PC-3 (cell line): ENCODE measurements at regions of chr3 and their contacts with region 1.

Region 1: GRCh38 chr3:50519471-50520089 is 16.1 kb upstream of the CACNA2D2 start:
- DNase-seq: peak; percentile 77
- ATAC-seq: peak; percentile 91
- H3K4me3 ChIP-seq: no peak overlapping the region
- H3K27ac ChIP-seq: no peak overlapping the region
- H3K4me1 ChIP-seq: no peaks in the 10 kb centered on the region
- H3K27me3 ChIP-seq: peaks cover 9% of the 10 kb centered on the region; the same call in 1 of the 2 replicates
- CTCF ChIP-seq: peak; percentile 93

Region 2: GRCh38 chr3:50542177-50543034 is 22.8 kb after region 1 on chr3:
- CTCF ChIA-PET with region 1: no interaction called
- POLR2A ChIA-PET with region 1: no interaction called
- intact Hi-C with region 1: loop called (anchors 1 kb)
- DNase-seq: peak; percentile 88
- ATAC-seq: peak; percentile 92
- H3K4me3 ChIP-seq: no peak overlapping the region
- H3K27ac ChIP-seq: no peak overlapping the region
- H3K4me1 ChIP-seq: no peaks in the 10 kb centered on the region
- H3K27me3 ChIP-seq: peaks cover 14% of the 10 kb centered on the region
- CTCF ChIP-seq: peak; percentile 95

Region 3: DNA sequence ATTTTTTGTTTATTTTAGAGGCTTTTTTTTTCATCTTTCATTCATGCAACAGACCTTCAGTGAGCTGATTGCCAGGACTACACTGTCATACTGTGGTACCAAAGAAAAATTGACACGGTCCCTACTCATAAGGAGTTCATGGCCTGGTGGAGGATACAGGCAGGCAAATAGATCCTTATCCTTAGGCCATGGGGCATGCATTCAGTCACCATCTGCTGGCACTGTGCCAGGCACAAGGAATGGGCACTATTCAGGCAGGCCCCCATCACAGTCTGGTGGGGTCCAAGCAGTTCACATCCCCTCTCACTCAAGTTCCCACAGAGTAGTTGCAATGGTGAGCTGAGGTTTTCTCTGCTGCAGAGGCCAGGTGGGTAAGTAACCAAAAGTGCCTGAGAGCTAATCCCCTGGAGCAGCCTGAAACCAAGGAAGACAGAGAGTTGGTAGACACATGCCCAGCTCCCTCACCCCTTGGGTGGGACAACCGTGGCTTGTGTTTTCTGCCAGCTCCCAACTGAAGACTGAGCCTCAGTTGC is 74.7 kb after region 1 on chr3:
- CTCF ChIA-PET with region 1: interaction called, 10 read pairs
- POLR2A ChIA-PET with region 1: no interaction called
- intact Hi-C with region 1: no loop called
- DNase-seq: no peak
- ATAC-seq: no peak
- H3K4me3 ChIP-seq: no peak overlapping the region
- H3K27ac ChIP-seq: no peak overlapping the region
- H3K4me1 ChIP-seq: peaks cover 2% of the 10 kb centered on the region; the same call in 1 of the 2 replicates
- H3K27me3 ChIP-seq: no peaks in the 10 kb centered on the region
- CTCF ChIP-seq: no peak

Region 4: GRCh38 chr3:50600841-50601591 is 81.4 kb after region 1 on chr3:
- CTCF ChIA-PET with region 1: no interaction called
- POLR2A ChIA-PET with region 1: interaction called, 16 read pairs
- intact Hi-C with region 1: no loop called
- DNase-seq: peak; percentile 92
- ATAC-seq: peak; percentile 86
- H3K4me3 ChIP-seq: peak overlapping the region; percentile 36; the same call in 1 of the 2 replicates
- H3K27ac ChIP-seq: peak overlapping the region; percentile 36
- H3K4me1 ChIP-seq: peaks cover 27% of the 10 kb centered on the region
- H3K27me3 ChIP-seq: no peaks in the 10 kb centered on the region
- CTCF ChIP-seq: no peak